Colonic mucosa (tissue), 4 donors: ENCODE measurements at regions of chr10 and their contacts with region 1.

Region 1: GRCh38 chr10:28432210-28432676 is 100.7 kb upstream of the WAC start:
- DNase-seq: peak; percentile 60
- H3K4me3 ChIP-seq: no peak overlapping the region
- H3K27ac ChIP-seq: no peak overlapping the region
- H3K4me1 ChIP-seq: no peaks in the 10 kb centered on the region
- H3K27me3 ChIP-seq: no peaks in the 10 kb centered on the region
- CTCF ChIP-seq: peak; percentile 71

Region 2: DNA sequence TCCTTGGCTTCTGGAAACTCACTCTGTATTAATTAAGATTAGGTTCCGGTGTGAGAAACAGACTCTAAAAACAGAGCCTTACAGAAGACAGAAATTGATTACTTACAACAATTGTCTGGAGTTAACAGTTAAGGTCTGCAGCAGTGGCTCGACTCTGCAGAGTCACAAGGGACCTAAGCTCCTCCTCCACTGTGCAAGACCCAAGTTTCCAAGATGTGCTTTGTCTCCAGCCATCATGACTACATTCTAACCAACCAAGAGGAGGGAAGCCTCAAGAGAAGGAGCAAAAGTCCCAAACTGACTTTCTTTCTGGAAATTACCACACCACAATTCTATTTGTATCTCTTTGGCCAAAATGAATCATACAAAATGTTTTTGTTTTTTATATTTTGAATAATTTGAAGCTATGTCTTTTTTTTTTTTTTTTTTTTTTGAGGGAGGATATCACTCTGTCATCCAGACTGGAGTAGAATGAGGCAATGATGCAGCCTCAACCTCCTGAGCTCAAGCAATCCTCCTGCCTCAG is 419.2 kb before region 1 on chr10:
- intact Hi-C with region 1: no loop called
- DNase-seq: no peak
- H3K4me3 ChIP-seq: no peak overlapping the region
- H3K27ac ChIP-seq: no peak overlapping the region
- H3K4me1 ChIP-seq: no peaks in the 10 kb centered on the region
- H3K27me3 ChIP-seq: no peaks in the 10 kb centered on the region
- CTCF ChIP-seq: no peak

Region 3: DNA sequence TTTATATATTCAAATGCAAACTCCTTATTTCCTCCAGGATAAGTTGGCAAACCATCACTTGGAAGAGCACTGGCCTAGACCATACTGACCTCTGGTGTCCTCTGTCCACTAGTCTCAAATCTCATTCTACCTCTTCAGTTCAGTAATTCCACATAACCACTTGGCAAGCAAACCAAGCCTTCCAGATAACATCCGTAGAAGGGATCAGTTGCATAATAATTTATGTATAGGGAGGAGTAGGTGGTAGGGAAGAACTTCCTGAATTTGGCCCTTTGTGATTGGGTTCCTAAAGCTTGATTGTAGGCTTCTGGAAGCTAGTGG is 155.7 kb after region 1 on chr10:
- intact Hi-C with region 1: loop called (anchors 10 kb)
- DNase-seq: no peak
- H3K4me3 ChIP-seq: no peak overlapping the region
- H3K27ac ChIP-seq: peak overlapping the region; percentile 0
- H3K4me1 ChIP-seq: peaks cover 9% of the 10 kb centered on the region
- H3K27me3 ChIP-seq: no peaks in the 10 kb centered on the region
- CTCF ChIP-seq: no peak